Activated CD8-positive, alpha-beta T cell treated with anti-CD3 and anti-CD28 coated beads, Interleukin-2, amount 10 ng/mL, durations not matched to agents 7 days and 5 days (primary cell): ENCODE measurements at regions of chr1 and their contacts with region 1.

Region 1: GRCh38 chr1:153510984-153511410 is 24.8 kb downstream of the S100A6 start:
- DNase-seq: peak; percentile 87
- ATAC-seq: peak; percentile 92
- H3K4me3 Mint-ChIP-seq: no peak overlapping the region
- H3K27ac Mint-ChIP-seq: peak overlapping the region; percentile 51
- H3K4me1 Mint-ChIP-seq: peaks cover 14% of the 10 kb centered on the region
- H3K27me3 Mint-ChIP-seq: no peaks in the 10 kb centered on the region

Region 2: GRCh38 chr1:153494976-153495535 is 15.9 kb before region 1 on chr1:
- CTCF ChIA-PET with region 1: interaction called, 27 read pairs
- POLR2A ChIA-PET with region 1: no interaction called
- DNase-seq: peak; percentile 79
- ATAC-seq: peak; percentile 60
- H3K4me3 Mint-ChIP-seq: no peak overlapping the region
- H3K27ac Mint-ChIP-seq: no peak overlapping the region
- H3K4me1 Mint-ChIP-seq: no peaks in the 10 kb centered on the region
- H3K27me3 Mint-ChIP-seq: peaks cover 21% of the 10 kb centered on the region

Region 3: DNA sequence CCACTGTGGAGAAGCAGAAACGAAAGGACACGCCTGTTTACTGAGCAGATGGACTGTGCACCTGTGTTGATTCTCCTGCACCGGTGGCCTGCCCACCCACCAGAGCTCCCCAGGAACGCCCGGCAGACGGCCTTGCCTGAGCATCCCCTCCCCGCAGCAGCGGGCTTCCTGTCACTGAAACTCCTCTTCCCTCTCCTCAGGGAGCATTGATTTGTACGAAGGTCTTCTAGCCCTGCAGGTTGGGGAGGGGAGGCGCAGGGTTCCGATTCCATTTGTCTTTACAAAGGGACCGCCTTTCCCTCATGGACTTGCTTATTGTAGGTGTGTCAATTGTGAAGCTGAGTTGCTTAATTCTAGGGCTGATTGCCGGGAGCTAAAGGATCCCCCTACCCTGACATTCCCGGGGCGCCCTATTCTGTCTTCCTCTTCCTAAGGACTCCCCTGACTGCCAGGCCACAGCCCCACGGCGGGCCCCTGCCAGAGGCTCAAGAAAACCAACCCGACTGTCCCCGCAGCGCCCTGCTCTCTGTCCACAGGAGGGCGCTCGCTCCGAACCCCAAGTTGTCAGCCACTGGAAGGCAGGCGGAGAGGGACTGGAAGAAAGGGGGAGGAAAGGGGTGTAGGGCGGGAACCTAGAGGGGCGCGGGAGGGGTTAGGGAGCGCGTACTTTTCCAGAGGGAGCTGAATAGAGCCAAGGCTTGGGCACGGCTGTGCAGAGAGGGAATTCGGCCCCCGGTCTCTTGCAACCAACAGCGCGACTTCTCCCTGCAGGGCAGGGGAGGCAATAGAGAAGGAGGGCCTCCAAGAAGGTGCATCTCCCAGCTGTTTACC is 22.0 kb after region 1 on chr1:
- CTCF ChIA-PET with region 1: interaction called, 73 read pairs
- POLR2A ChIA-PET with region 1: interaction called, 3 read pairs
- DNase-seq: peak; percentile 86
- ATAC-seq: peak; percentile 29
- H3K4me3 Mint-ChIP-seq: peak overlapping the region; percentile 98
- H3K27ac Mint-ChIP-seq: peak overlapping the region; percentile 90
- H3K4me1 Mint-ChIP-seq: peaks cover 63% of the 10 kb centered on the region
- H3K27me3 Mint-ChIP-seq: no peaks in the 10 kb centered on the region

Region 4: DNA sequence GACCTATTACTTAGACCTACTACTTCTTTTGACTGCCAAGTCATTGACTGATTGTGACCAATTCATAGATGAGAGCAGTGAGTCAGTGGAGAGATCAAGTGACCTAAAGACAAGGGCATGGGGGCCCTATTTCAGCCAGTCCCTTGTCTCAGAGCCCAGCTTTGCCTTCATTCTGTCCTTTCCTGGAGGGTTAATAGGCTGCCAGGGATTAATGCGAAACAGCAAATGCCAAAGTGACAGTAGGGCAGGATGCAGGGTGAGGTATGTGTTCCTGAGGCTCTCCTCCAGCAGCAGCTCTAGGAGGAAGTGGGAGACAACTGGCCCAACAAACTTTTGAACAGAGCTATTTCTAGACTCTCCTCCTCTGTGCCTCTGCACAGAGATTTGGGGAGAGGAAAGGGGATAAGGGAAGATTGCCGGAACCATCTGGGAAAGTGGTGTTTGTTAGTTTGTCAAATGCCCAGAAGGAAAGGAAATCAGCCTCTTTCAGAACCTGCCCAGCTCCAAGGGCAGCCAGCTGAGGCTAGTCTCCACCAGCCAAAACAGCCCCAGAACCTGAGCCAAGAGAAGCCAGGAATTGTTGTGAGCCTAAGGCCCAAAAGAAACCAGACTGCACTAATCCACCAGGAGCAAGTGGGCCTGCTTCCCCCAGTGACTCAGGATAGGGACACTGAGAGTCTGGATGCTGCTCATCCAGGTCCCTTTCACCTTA is 43.0 kb after region 1 on chr1:
- CTCF ChIA-PET with region 1: interaction called, 68 read pairs
- POLR2A ChIA-PET with region 1: no interaction called
- DNase-seq: no peak
- ATAC-seq: no peak
- H3K4me3 Mint-ChIP-seq: no peak overlapping the region
- H3K27ac Mint-ChIP-seq: no peak overlapping the region
- H3K4me1 Mint-ChIP-seq: peaks cover 12% of the 10 kb centered on the region
- H3K27me3 Mint-ChIP-seq: peaks cover 5% of the 10 kb centered on the region

Region 5: DNA sequence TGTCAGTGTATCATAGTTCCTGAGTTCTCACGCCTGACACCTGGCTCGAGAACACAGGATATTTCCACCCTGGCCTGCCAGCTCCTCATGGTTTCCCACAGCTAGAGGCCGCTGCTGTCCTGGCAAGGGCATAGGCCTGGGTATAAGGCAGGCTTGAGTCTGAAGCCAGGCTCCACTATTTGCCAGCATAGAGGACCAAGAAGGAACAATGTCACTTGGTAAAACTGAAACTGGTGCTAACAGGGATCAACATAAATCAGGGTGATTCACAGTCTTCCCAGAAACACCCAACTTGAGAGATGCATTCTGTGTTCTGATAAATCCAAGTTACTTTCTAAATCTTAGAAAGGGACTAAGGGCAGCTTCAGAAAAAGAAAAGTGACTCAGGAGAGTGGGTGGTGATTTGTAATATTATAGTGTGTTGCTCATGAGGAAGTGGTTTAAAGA is 61.6 kb after region 1 on chr1:
- CTCF ChIA-PET with region 1: interaction called, 173 read pairs
- POLR2A ChIA-PET with region 1: interaction called, 3 read pairs
- DNase-seq: peak; percentile 65
- ATAC-seq: peak; percentile 78
- H3K4me3 Mint-ChIP-seq: no peak overlapping the region
- H3K27ac Mint-ChIP-seq: no peak overlapping the region
- H3K4me1 Mint-ChIP-seq: peaks cover 33% of the 10 kb centered on the region
- H3K27me3 Mint-ChIP-seq: peaks cover 17% of the 10 kb centered on the region

Region 6: GRCh38 chr1:153598309-153599172 is 87.5 kb after region 1 on chr1:
- CTCF ChIA-PET with region 1: interaction called, 21 read pairs
- POLR2A ChIA-PET with region 1: no interaction called
- DNase-seq: peak; percentile 55
- ATAC-seq: peak; percentile 84
- H3K4me3 Mint-ChIP-seq: no peak overlapping the region
- H3K27ac Mint-ChIP-seq: peak overlapping the region; percentile 71
- H3K4me1 Mint-ChIP-seq: peaks cover 15% of the 10 kb centered on the region
- H3K27me3 Mint-ChIP-seq: peaks cover 3% of the 10 kb centered on the region

Region 7: DNA sequence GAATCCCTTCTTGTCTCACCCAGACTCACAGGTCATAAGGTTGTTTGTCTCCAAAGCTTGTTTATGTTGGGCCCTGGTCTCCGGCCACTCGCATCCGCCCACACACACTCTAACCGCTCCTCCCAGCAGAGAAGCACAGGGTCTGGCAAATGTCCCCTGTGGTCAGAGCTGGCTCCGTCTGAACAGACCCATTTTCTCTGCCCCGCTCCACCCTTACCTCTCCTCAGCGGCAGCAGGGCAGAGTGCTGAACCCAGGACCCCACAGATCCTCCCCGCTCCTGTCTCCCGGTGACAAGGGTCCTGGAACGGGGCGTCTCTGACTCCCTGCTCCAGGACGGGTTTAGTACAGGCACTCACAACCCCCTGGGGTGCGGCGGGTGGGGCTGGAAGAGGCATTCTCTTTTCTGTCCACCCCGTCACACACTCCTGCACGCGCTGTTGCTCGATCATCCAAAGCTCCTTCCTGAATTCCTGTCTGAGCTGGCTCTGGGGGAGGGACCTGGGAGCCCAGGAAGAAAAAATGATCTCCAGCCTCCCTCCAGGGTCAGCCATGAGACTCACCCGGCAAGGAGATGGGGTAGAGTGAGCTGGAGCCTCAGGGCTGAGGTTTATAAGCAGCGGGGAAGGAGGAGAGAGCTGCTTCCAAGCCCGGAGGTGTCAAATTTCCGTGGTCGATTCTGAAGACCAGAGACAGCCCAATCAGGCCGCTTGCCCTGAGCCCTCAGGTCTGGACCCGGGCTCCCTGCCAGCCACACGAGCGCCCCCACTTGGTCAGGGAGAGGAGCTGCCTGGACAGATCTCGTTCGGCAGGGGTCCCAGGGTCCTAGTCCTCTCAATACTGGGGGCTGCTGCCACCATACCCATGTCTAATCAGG is 116.2 kb after region 1 on chr1 and contains the start of gene S100A13:
- CTCF ChIA-PET with region 1: interaction called, 16 read pairs
- POLR2A ChIA-PET with region 1: no interaction called
- DNase-seq: no peak
- ATAC-seq: no peak
- H3K4me3 Mint-ChIP-seq: no peak within 1 kb of the TSS
- H3K27ac Mint-ChIP-seq: no peak within 1 kb of the TSS
- H3K4me1 Mint-ChIP-seq: peaks cover 18% of the 10 kb centered on the region
- H3K27me3 Mint-ChIP-seq: no peaks in the 10 kb centered on the region
- total RNA-seq, gene S100A13: 6.2 to 7.0 TPM